ENCODE measurements at regions of chr6 and their contacts with region 1.

Region 1: GRCh38 chr6:33208091-33208967 is at the start of gene RING1:
- DNase-seq: peak; percentile 88 to 95
- ATAC-seq: peak; percentile 67 to 79 (median 71)
- H3K4me3 ChIP-seq: peak within 1 kb of the TSS; percentile 97
- H3K4me3 Mint-ChIP-seq: peak within 1 kb of the TSS; percentile 98
- H3K27ac ChIP-seq: peak within 1 kb of the TSS; percentile 96
- H3K27ac Mint-ChIP-seq: peak within 1 kb of the TSS; percentile 95 to 97
- H3K4me1 ChIP-seq: peaks cover 40% of the 10 kb centered on the region
- H3K4me1 Mint-ChIP-seq: peaks cover 41 to 61% of the 10 kb centered on the region in 2 donors
- H3K27me3 ChIP-seq: peaks cover 7% of the 10 kb centered on the region
- H3K27me3 Mint-ChIP-seq: peaks cover 9 to 14% of the 10 kb centered on the region in 2 donors
- CTCF ChIP-seq: no peak
- total RNA-seq, gene RING1: 34.5 to 40.3 (median 36.5) TPM

Region 2: GRCh38 chr6:33271458-33272274 is 63.3 kb after region 1 on chr6 and contains the starts of genes RPS18 and VPS52:
- intact Hi-C with region 1: loop called (anchors 2 kb)
- DNase-seq: peak; percentile 83 to 99
- ATAC-seq: peak; percentile 86 to 95 (median 91)
- H3K4me3 ChIP-seq: peak within 1 kb of the TSS; percentile 71
- H3K4me3 Mint-ChIP-seq: peak within 1 kb of the TSS; percentile 96
- H3K27ac ChIP-seq: peak within 1 kb of the TSS; percentile 89
- H3K27ac Mint-ChIP-seq: peak within 1 kb of the TSS; percentile 97 to 98
- H3K4me1 ChIP-seq: peaks cover 40% of the 10 kb centered on the region
- H3K4me1 Mint-ChIP-seq: peaks cover 57 to 63% of the 10 kb centered on the region in 2 donors
- H3K27me3 ChIP-seq: no peaks in the 10 kb centered on the region
- H3K27me3 Mint-ChIP-seq: no peaks in the 10 kb centered on the region
- CTCF ChIP-seq: no peak
- total RNA-seq, gene RPS18: 1,182 to 1,707 (median 1,500) TPM
- total RNA-seq, gene VPS52: 98.0 to 112 (median 99.4) TPM